Astrocyte of the cerebellum (primary cell): ENCODE measurements at regions of chr13 and their contacts with region 1.

Region 1: DNA sequence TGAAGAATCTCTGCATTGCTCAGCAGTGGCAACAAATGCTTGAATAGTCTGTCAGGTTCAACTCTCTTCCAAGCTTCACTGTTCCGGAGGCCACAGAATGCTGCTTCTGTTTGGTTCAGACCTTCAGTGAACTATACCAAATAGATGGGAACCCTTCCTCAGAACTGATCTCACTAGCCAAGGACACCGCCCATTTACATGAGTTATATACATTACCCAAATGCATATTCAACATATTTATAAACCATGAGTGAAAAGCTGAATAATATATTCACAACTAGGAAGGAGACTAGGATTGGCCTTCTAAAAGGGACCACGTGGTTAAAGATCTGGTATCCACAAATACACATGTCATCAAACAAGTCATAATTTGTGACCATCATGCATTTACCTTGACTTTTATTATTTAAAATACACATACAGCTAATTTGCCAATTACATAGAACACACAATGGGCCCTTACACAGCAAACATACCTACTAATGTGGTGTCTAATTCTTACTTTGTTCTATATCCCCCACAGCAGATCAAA is 49.3 kb downstream of the ENOX1 start:
- DNase-seq: no peak
- H3K4me3 ChIP-seq: no peak overlapping the region
- CTCF ChIP-seq: no peak

Region 2: GRCh38 chr13:43132257-43132656 is 605.2 kb before region 1 on chr13:
- in situ Hi-C with region 1: no loop called
- DNase-seq: no peak
- H3K4me3 ChIP-seq: no peak overlapping the region
- CTCF ChIP-seq: peak; percentile 39

Region 3: GRCh38 chr13:43374621-43375020 is 362.8 kb before region 1 on chr13:
- in situ Hi-C with region 1: no loop called
- DNase-seq: peak; percentile 79
- H3K4me3 ChIP-seq: no peak overlapping the region
- CTCF ChIP-seq: no peak

Region 4: GRCh38 chr13:43648733-43649132 is 88.7 kb before region 1 on chr13:
- in situ Hi-C with region 1: no loop called
- DNase-seq: no peak
- H3K4me3 ChIP-seq: no peak overlapping the region
- CTCF ChIP-seq: no peak

Region 5: GRCh38 chr13:43676320-43676719 is 61.1 kb before region 1 on chr13:
- in situ Hi-C with region 1: loop called (anchors 5 kb)
- DNase-seq: no peak
- H3K4me3 ChIP-seq: no peak overlapping the region
- CTCF ChIP-seq: no peak

Region 6: GRCh38 chr13:44758630-44759383 is 1021.3 kb after region 1 on chr13:
- in situ Hi-C with region 1: no loop called
- DNase-seq: peak; percentile 73
- H3K4me3 ChIP-seq: no peak overlapping the region
- CTCF ChIP-seq: no peak